CD14-positive monocyte (primary cell): ENCODE measurements at regions of chr11 and their contacts with region 1.

Region 1: GRCh38 chr11:69088676-69089146 is 40.0 kb downstream of the TPCN2 start:
- DNase-seq: peak; percentile 56 to 66 (median 63)
- H3K4me3 ChIP-seq: no peak overlapping the region
- H3K4me3 Mint-ChIP-seq: no peak overlapping the region
- H3K27ac ChIP-seq: peak overlapping the region in 1 of 2 donors; percentile 39
- H3K27ac Mint-ChIP-seq: peak overlapping the region; percentile 33 to 80 (median 57)
- H3K4me1 ChIP-seq: no peaks in the 10 kb centered on the region
- H3K4me1 Mint-ChIP-seq: peaks cover 5% of the 10 kb centered on the region
- H3K27me3 ChIP-seq: no peaks in the 10 kb centered on the region
- H3K27me3 Mint-ChIP-seq: peaks cover 0 to 1% (median 0%) of the 10 kb centered on the region in 3 donors
- CTCF ChIP-seq: peak; percentile 78

Region 2: GRCh38 chr11:68806921-68807844 is 281.5 kb before region 1 on chr11:
- intact Hi-C with region 1: no loop called
- DNase-seq: no peak
- H3K4me3 ChIP-seq: no peak overlapping the region
- H3K4me3 Mint-ChIP-seq: no peak overlapping the region
- H3K27ac ChIP-seq: no peak overlapping the region
- H3K27ac Mint-ChIP-seq: peak overlapping the region in 4 of 7 donors; percentile 36 to 64 (median 38)
- H3K4me1 ChIP-seq: no peaks in the 10 kb centered on the region
- H3K4me1 Mint-ChIP-seq: no peaks in the 10 kb centered on the region
- H3K27me3 ChIP-seq: no peaks in the 10 kb centered on the region
- H3K27me3 Mint-ChIP-seq: peaks cover 0 to 3% (median 0%) of the 10 kb centered on the region in 3 donors
- CTCF ChIP-seq: no peak

Region 3: DNA sequence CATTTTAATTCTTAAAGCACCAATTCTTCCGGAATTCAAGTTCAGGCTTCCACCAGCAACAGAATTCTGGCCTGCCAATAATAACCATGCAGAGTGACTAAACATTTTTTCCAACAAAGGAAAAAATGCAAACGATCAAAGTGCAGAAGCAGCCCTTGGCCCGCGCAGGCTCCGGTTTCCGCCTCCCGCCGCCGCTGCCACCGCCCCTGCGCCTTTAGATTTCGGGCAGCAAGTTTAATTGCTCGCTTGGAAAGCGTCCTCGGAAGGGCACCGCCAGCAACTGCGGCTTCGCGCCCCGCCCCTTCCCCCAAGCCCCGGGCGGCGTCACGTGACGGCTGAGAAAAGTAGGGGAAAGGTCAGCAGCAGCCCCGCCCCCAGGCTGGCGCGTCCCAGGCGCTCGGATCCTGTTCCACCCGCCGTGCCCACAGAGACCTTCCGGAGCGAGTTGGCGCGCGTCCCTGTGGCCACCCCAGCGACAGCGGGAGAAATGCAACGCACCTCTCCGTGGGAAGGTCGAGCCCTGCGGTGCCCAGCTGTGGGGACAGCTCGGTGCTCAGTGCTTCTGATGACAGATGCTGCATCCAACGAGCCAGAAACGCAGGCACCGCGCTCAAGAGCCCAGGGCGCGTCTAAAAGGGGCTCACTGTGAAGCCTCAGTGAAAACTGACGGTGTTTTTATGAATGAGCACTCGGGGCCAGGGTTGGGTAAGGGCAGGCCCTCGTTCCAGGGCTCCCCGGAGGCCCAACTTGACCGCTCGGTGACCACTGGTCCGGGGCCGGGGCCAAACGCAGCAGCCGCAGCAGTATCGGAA is 249.5 kb before region 1 on chr11:
- intact Hi-C with region 1: loop called in 1 of 2 experiments (anchors 10 kb)
- DNase-seq: peak; percentile 91 to 94 (median 93)
- H3K4me3 ChIP-seq: peak overlapping the region; percentile 76 to 91 (median 89)
- H3K4me3 Mint-ChIP-seq: peak overlapping the region; percentile 81 to 89
- H3K27ac ChIP-seq: peak overlapping the region; percentile 94
- H3K27ac Mint-ChIP-seq: peak overlapping the region; percentile 88 to 97 (median 93)
- H3K4me1 ChIP-seq: peaks cover 74 to 89% of the 10 kb centered on the region in 2 donors
- H3K4me1 Mint-ChIP-seq: peaks cover 72% of the 10 kb centered on the region
- H3K27me3 ChIP-seq: no peaks in the 10 kb centered on the region
- H3K27me3 Mint-ChIP-seq: no peaks in the 10 kb centered on the region
- CTCF ChIP-seq: no peak

Region 4: DNA sequence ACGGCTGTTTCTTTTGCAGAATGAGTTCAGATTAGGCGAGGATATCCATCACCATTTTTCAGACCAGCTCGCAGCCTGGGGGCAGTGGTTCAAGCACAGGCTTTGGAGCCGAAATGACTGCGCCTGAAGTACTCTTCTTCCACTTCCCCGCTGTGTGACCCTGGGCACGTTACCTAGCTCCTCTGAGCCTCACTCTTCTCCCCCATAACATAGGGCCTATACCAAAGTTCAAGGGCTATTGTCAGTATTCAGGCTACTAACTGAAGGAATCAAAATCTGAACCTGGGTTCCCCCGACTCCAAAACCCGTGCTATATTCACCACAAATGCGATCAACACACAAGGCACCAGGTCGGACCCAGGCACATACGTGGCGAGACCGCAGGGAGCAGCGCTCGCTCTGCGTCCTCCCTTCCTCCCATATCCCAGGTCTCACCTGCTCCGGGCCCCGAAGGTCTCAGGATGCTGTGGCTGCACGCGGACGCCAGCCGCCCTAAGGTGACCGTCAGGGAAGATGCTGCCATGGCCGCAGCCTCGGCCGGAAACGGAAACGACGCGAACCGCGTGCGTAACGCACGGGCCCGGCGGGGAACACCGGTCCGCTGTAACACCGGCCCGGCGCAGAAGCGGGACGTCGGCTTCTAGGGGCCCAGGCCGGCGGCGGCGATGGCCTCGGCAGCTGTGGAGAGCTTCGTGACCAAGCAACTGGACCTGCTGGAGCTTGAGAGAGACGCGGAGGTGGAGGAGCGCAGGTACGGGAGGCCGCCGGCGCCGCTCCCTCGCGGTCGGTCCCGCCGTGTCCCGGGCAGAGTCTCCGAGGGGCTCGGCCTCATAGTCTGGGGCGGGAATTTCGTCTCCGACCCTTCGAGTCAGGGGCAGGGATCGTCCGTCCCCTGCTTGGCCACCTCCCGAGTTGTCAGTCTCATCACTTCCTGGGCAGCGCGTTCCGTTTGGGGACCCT is 185.1 kb before region 1 on chr11 and contains the starts of genes IGHMBP2 and MRPL21:
- intact Hi-C with region 1: loop called (anchors 5 to 10 kb)
- DNase-seq: peak; percentile 82 to 88 (median 85)
- H3K4me3 ChIP-seq: peak within 1 kb of the TSS; percentile 70 to 93 (median 84)
- H3K4me3 Mint-ChIP-seq: peak within 1 kb of the TSS; percentile 99 to 100
- H3K27ac ChIP-seq: peak within 1 kb of the TSS; percentile 48 to 87
- H3K27ac Mint-ChIP-seq: peak within 1 kb of the TSS; percentile 92 to 97 (median 94)
- H3K4me1 ChIP-seq: peaks cover 17 to 24% of the 10 kb centered on the region in 2 donors
- H3K4me1 Mint-ChIP-seq: peaks cover 36% of the 10 kb centered on the region
- H3K27me3 ChIP-seq: no peaks in the 10 kb centered on the region
- H3K27me3 Mint-ChIP-seq: peaks cover 0 to 3% (median 0%) of the 10 kb centered on the region in 3 donors
- CTCF ChIP-seq: no peak
- polyA plus RNA-seq, gene IGHMBP2: 3.9 to 14.9 (median 6.0) TPM
- polyA plus RNA-seq, gene MRPL21: 38.8 to 138 (median 104) TPM

Region 5: GRCh38 chr11:69000831-69001242 is 87.9 kb before region 1 on chr11:
- intact Hi-C with region 1: loop called in 1 of 2 experiments (anchors 10 kb)
- DNase-seq: no peak
- H3K4me3 ChIP-seq: no peak overlapping the region
- H3K4me3 Mint-ChIP-seq: no peak overlapping the region
- H3K27ac ChIP-seq: no peak overlapping the region
- H3K27ac Mint-ChIP-seq: no peak overlapping the region
- H3K4me1 ChIP-seq: no peaks in the 10 kb centered on the region
- H3K4me1 Mint-ChIP-seq: peaks cover 3% of the 10 kb centered on the region
- H3K27me3 ChIP-seq: no peaks in the 10 kb centered on the region
- H3K27me3 Mint-ChIP-seq: peaks cover 11 to 29% (median 21%) of the 10 kb centered on the region in 3 donors
- CTCF ChIP-seq: no peak

Region 6: GRCh38 chr11:69048718-69049489 is 39.8 kb before region 1 on chr11 and contains the start of gene TPCN2:
- intact Hi-C with region 1: loop called in 1 of 2 experiments (anchors 5 kb)
- DNase-seq: peak; percentile 92 to 97 (median 96)
- H3K4me3 ChIP-seq: peak within 1 kb of the TSS; percentile 79 to 93 (median 85)
- H3K4me3 Mint-ChIP-seq: peak within 1 kb of the TSS; percentile 81 to 88
- H3K27ac ChIP-seq: peak within 1 kb of the TSS; percentile 79 to 98
- H3K27ac Mint-ChIP-seq: peak within 1 kb of the TSS; percentile 89 to 96 (median 94)
- H3K4me1 ChIP-seq: peaks cover 56 to 75% of the 10 kb centered on the region in 2 donors
- H3K4me1 Mint-ChIP-seq: peaks cover 72% of the 10 kb centered on the region
- H3K27me3 ChIP-seq: no peaks in the 10 kb centered on the region
- H3K27me3 Mint-ChIP-seq: peaks cover 0 to 5% (median 2%) of the 10 kb centered on the region in 3 donors
- CTCF ChIP-seq: no peak
- polyA plus RNA-seq, gene TPCN2: 29.3 to 52.8 (median 31.5) TPM

Region 7: DNA sequence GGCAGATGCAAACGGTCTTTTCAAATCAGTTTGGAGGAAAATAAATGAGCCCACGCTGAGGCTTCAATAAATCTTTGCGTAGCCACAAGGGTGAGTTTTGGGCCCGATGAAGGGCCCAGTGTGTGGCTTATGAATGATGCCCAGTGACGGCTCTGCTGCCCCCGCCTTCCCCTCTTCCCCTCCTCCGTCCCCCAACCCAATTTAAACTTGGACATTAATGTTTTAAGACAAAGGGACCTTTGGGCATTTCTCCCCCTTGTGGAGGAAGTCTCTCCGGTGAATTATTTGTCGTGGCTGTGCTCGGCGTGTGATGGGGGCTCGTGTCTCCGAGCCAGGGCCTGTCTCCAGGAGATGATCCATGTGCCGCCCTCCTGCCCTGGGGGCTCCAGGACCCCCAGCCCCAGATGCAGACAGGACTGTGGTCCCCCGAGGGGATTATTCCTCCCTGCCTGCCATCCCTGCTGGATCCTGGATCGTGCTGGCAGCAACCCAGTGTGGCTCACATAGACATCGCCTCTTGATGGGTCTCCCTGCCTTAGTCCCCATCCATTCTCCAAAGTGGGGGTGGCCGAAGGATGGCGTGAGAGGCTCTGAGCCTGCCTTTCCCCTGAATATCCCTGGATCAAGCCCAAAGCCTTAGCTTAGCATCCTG is 123.3 kb after region 1 on chr11:
- intact Hi-C with region 1: no loop called
- DNase-seq: no peak
- H3K4me3 ChIP-seq: no peak overlapping the region
- H3K4me3 Mint-ChIP-seq: no peak overlapping the region
- H3K27ac ChIP-seq: no peak overlapping the region
- H3K27ac Mint-ChIP-seq: no peak overlapping the region
- H3K4me1 ChIP-seq: no peaks in the 10 kb centered on the region
- H3K4me1 Mint-ChIP-seq: peaks cover 2% of the 10 kb centered on the region
- H3K27me3 ChIP-seq: no peaks in the 10 kb centered on the region
- H3K27me3 Mint-ChIP-seq: peaks cover 6 to 25% (median 14%) of the 10 kb centered on the region in 3 donors
- CTCF ChIP-seq: no peak

Region 8: GRCh38 chr11:69510471-69511357 is 422.0 kb after region 1 on chr11:
- intact Hi-C with region 1: no loop called
- DNase-seq: no peak
- H3K4me3 ChIP-seq: no peak overlapping the region
- H3K4me3 Mint-ChIP-seq: no peak overlapping the region
- H3K27ac ChIP-seq: no peak overlapping the region
- H3K27ac Mint-ChIP-seq: no peak overlapping the region
- H3K4me1 ChIP-seq: peaks cover 0 to 5% of the 10 kb centered on the region in 2 donors
- H3K4me1 Mint-ChIP-seq: peaks cover 12% of the 10 kb centered on the region
- H3K27me3 ChIP-seq: no peaks in the 10 kb centered on the region
- H3K27me3 Mint-ChIP-seq: peaks cover 4 to 7% (median 4%) of the 10 kb centered on the region in 3 donors
- CTCF ChIP-seq: no peak